CD8-positive, alpha-beta T cell (primary cell): ENCODE measurements at regions of chr6 and their contacts with region 1.

Region 1: GRCh38 chr6:142474531-142475289 is 172.9 kb downstream of the ADGRG6 start:
- DNase-seq: peak in 2 of 9 experiments; percentile 51 to 64
- ATAC-seq: peak; percentile 51
- H3K4me3 ChIP-seq: no peak overlapping the region
- H3K4me3 Mint-ChIP-seq: no peak overlapping the region
- H3K27ac ChIP-seq: no peak overlapping the region
- H3K27ac Mint-ChIP-seq: no peak overlapping the region
- H3K4me1 ChIP-seq: no peaks in the 10 kb centered on the region
- H3K4me1 Mint-ChIP-seq: peaks cover 1% of the 10 kb centered on the region
- H3K27me3 ChIP-seq: no peaks in the 10 kb centered on the region
- H3K27me3 Mint-ChIP-seq: no peaks in the 10 kb centered on the region
- CTCF ChIP-seq: peak; percentile 98

Region 2: GRCh38 chr6:142155895-142156757 is 318.6 kb before region 1 on chr6:
- CTCF ChIA-PET with region 1: interaction called, 6 read pairs
- POLR2A ChIA-PET with region 1: no interaction called
- intact Hi-C with region 1: loop called in 1 of 2 experiments (anchors 5 kb)
- DNase-seq: peak in 2 of 9 experiments; percentile 19 to 44
- ATAC-seq: peak; percentile 76
- H3K4me3 ChIP-seq: no peak overlapping the region
- H3K4me3 Mint-ChIP-seq: no peak overlapping the region
- H3K27ac ChIP-seq: no peak overlapping the region
- H3K27ac Mint-ChIP-seq: peak overlapping the region; percentile 39
- H3K4me1 ChIP-seq: peaks cover 8% of the 10 kb centered on the region
- H3K4me1 Mint-ChIP-seq: peaks cover 69% of the 10 kb centered on the region
- H3K27me3 ChIP-seq: no peaks in the 10 kb centered on the region
- H3K27me3 Mint-ChIP-seq: no peaks in the 10 kb centered on the region
- CTCF ChIP-seq: peak; percentile 83

Region 3: GRCh38 chr6:142242269-142242668 is 232.4 kb before region 1 on chr6:
- CTCF ChIA-PET with region 1: no interaction called
- POLR2A ChIA-PET with region 1: no interaction called
- intact Hi-C with region 1: no loop called
- DNase-seq: no peak
- ATAC-seq: no peak
- H3K4me3 ChIP-seq: no peak overlapping the region
- H3K4me3 Mint-ChIP-seq: no peak overlapping the region
- H3K27ac ChIP-seq: no peak overlapping the region
- H3K27ac Mint-ChIP-seq: no peak overlapping the region
- H3K4me1 ChIP-seq: no peaks in the 10 kb centered on the region
- H3K4me1 Mint-ChIP-seq: no peaks in the 10 kb centered on the region
- H3K27me3 ChIP-seq: no peaks in the 10 kb centered on the region
- H3K27me3 Mint-ChIP-seq: peaks cover 4% of the 10 kb centered on the region
- CTCF ChIP-seq: no peak

Region 4: DNA sequence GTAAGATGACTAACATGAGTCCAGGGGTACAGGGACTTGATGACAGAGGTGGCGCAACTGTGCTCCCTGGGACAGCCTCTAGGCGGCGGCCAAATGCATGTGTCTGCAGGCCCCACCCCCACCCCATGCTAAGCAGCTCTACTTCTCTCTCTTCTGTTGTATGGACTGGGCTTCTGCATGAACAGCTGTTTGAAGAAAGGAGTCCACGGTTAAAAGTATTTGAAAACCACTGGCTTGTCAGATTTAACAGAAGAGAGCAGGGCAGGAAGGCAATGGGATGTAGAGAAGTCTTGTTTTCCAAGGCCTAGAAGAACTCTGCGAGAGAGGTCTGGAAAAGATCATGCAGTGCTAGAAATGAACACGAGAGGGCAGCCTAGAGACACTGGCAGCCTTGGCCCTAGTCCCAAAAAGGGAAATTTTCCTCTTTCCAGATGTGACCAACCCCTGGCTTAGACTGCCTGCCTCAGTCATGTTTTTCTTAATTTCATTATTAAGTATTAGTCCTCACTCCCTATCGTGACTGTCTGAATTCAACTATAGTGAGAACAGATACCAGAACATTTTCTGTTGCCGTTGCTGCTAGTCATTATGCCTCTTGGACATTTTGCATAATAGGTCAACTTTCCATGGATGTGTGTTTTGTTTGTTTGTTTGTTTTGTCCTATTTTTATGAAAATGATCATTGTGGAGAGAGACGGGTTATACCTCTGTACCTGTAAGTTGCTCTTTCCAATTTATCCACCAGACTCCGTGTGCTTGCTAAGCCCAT is 92.1 kb after region 1 on chr6:
- CTCF ChIA-PET with region 1: interaction called, 6 read pairs
- POLR2A ChIA-PET with region 1: no interaction called
- intact Hi-C with region 1: loop called (anchors 5 to 10 kb)
- DNase-seq: peak; percentile 22 to 72 (median 58)
- ATAC-seq: peak; percentile 57
- H3K4me3 ChIP-seq: no peak overlapping the region
- H3K4me3 Mint-ChIP-seq: no peak overlapping the region
- H3K27ac ChIP-seq: no peak overlapping the region
- H3K27ac Mint-ChIP-seq: no peak overlapping the region
- H3K4me1 ChIP-seq: peaks cover 47% of the 10 kb centered on the region
- H3K4me1 Mint-ChIP-seq: peaks cover 61% of the 10 kb centered on the region
- H3K27me3 ChIP-seq: no peaks in the 10 kb centered on the region
- H3K27me3 Mint-ChIP-seq: no peaks in the 10 kb centered on the region
- CTCF ChIP-seq: peak; percentile 75

Region 5: DNA sequence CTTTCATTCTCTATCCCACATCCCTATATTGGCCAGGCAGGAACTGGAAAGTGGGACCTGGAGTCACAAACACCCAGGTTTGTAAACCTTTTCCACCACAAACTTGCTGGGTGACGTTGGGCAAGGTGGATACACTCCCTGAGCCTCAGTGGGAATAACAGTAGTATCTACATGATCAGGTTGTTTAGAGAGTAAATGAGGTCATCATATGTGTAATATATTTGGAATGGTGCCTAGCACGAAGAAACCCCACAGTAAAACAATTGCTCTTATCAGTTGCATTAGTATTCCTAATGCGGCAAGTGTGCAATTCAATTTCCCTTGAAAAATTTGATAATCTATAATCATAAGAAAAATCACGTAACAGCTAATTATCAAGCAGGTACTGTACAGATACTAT is 418.4 kb after region 1 on chr6:
- CTCF ChIA-PET with region 1: no interaction called
- POLR2A ChIA-PET with region 1: no interaction called
- intact Hi-C with region 1: loop called in 1 of 2 experiments (anchors 10 kb)
- DNase-seq: no peak
- ATAC-seq: no peak
- H3K4me3 ChIP-seq: no peak overlapping the region
- H3K4me3 Mint-ChIP-seq: no peak overlapping the region
- H3K27ac ChIP-seq: no peak overlapping the region
- H3K27ac Mint-ChIP-seq: peak overlapping the region; percentile 43
- H3K4me1 ChIP-seq: peaks cover 60% of the 10 kb centered on the region
- H3K4me1 Mint-ChIP-seq: peaks cover 69% of the 10 kb centered on the region
- H3K27me3 ChIP-seq: no peaks in the 10 kb centered on the region
- H3K27me3 Mint-ChIP-seq: no peaks in the 10 kb centered on the region
- CTCF ChIP-seq: no peak

Region 6: GRCh38 chr6:143427109-143427817 is 952.6 kb after region 1 on chr6:
- CTCF ChIA-PET with region 1: interaction called, 86 read pairs
- POLR2A ChIA-PET with region 1: interaction called, 3 read pairs
- intact Hi-C with region 1: loop called (anchors 1 kb)
- DNase-seq: peak; percentile 42 to 81 (median 72)
- ATAC-seq: peak; percentile 100
- H3K4me3 ChIP-seq: no peak overlapping the region
- H3K4me3 Mint-ChIP-seq: no peak overlapping the region
- H3K27ac ChIP-seq: no peak overlapping the region
- H3K27ac Mint-ChIP-seq: no peak overlapping the region
- H3K4me1 ChIP-seq: no peaks in the 10 kb centered on the region
- H3K4me1 Mint-ChIP-seq: peaks cover 2% of the 10 kb centered on the region
- H3K27me3 ChIP-seq: no peaks in the 10 kb centered on the region
- H3K27me3 Mint-ChIP-seq: no peaks in the 10 kb centered on the region
- CTCF ChIP-seq: peak; percentile 95

Region 7: DNA sequence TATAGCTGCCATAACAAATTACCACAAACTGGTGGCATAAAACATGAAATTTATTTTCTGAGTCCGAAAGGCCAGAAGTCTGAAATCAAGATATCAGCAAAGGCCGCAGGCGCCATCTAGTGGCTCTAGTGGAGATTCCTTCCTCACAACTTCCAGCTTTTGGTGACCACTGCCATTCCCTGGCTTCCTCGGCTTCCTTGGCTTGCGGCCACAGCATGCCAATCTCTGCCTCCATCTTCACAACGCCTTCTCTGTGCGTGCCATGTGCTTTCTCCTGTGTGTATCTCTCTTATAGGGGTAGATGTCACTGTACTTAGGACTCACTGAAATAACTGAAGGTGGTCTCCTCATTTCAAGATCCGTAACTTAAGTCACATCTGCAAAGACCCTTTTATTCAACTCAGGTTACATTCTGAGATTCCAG is 1538.8 kb after region 1 on chr6:
- CTCF ChIA-PET with region 1: interaction called, 9 read pairs
- POLR2A ChIA-PET with region 1: no interaction called
- intact Hi-C with region 1: loop called in 1 of 2 experiments (anchors 2 kb)
- DNase-seq: peak; percentile 16 to 74 (median 63)
- ATAC-seq: no peak
- H3K4me3 ChIP-seq: no peak overlapping the region
- H3K4me3 Mint-ChIP-seq: no peak overlapping the region
- H3K27ac ChIP-seq: no peak overlapping the region
- H3K27ac Mint-ChIP-seq: no peak overlapping the region
- H3K4me1 ChIP-seq: no peaks in the 10 kb centered on the region
- H3K4me1 Mint-ChIP-seq: peaks cover 4% of the 10 kb centered on the region
- H3K27me3 ChIP-seq: no peaks in the 10 kb centered on the region
- H3K27me3 Mint-ChIP-seq: peaks cover 3% of the 10 kb centered on the region
- CTCF ChIP-seq: peak; percentile 90